ENCODE measurements at regions of chr17 and their contacts with region 1.

Region 1: GRCh38 chr17:39164675-39165143 is 1.3 kb downstream of the ARL5C start:
- DNase-seq: peak; percentile 83
- H3K4me3 Mint-ChIP-seq: peak overlapping the region; percentile 90
- H3K27ac Mint-ChIP-seq: no peak overlapping the region
- H3K4me1 Mint-ChIP-seq: peaks cover 16% of the 10 kb centered on the region
- H3K27me3 Mint-ChIP-seq: peaks cover 23% of the 10 kb centered on the region

Region 2: GRCh38 chr17:39174907-39175694 is 10.4 kb after region 1 on chr17:
- CTCF ChIA-PET with region 1: interaction called, 73 read pairs
- intact Hi-C with region 1: no loop called
- DNase-seq: peak; percentile 85
- H3K4me3 Mint-ChIP-seq: no peak overlapping the region
- H3K27ac Mint-ChIP-seq: no peak overlapping the region
- H3K4me1 Mint-ChIP-seq: peaks cover 4% of the 10 kb centered on the region
- H3K27me3 Mint-ChIP-seq: no peaks in the 10 kb centered on the region

Region 3: GRCh38 chr17:39183720-39184119 is 19.0 kb after region 1 on chr17:
- CTCF ChIA-PET with region 1: interaction called, 16 read pairs
- intact Hi-C with region 1: no loop called
- DNase-seq: no peak
- H3K4me3 Mint-ChIP-seq: no peak overlapping the region
- H3K27ac Mint-ChIP-seq: no peak overlapping the region
- H3K4me1 Mint-ChIP-seq: no peaks in the 10 kb centered on the region
- H3K27me3 Mint-ChIP-seq: no peaks in the 10 kb centered on the region

Region 4: DNA sequence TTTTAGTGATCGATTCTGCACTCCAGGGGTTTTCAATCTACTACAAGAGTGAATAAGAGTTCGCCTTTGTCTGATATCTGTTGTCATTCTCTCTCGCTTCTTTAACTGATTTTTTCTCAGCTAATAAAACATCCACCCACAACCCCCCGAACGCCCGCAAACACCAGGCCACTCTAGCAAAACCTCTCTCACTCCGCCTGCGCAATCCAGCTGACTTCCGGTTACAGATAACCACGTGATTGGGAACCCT is 35.0 kb after region 1 on chr17:
- CTCF ChIA-PET with region 1: interaction called, 9 read pairs
- intact Hi-C with region 1: loop called (anchors 2 kb)
- DNase-seq: peak; percentile 94
- H3K4me3 Mint-ChIP-seq: peak overlapping the region; percentile 86
- H3K27ac Mint-ChIP-seq: peak overlapping the region; percentile 99
- H3K4me1 Mint-ChIP-seq: peaks cover 50% of the 10 kb centered on the region
- H3K27me3 Mint-ChIP-seq: no peaks in the 10 kb centered on the region

Region 5: GRCh38 chr17:39235555-39236449 is 71.1 kb after region 1 on chr17:
- CTCF ChIA-PET with region 1: interaction called, 16 read pairs
- intact Hi-C with region 1: loop called (anchors 5 kb)
- DNase-seq: peak; percentile 76
- H3K4me3 Mint-ChIP-seq: no peak overlapping the region
- H3K27ac Mint-ChIP-seq: no peak overlapping the region
- H3K4me1 Mint-ChIP-seq: peaks cover 34% of the 10 kb centered on the region
- H3K27me3 Mint-ChIP-seq: peaks cover 2% of the 10 kb centered on the region

Region 6: GRCh38 chr17:39244600-39245570 is 80.2 kb after region 1 on chr17:
- CTCF ChIA-PET with region 1: interaction called, 16 read pairs
- intact Hi-C with region 1: no loop called
- DNase-seq: peak; percentile 96
- H3K4me3 Mint-ChIP-seq: no peak overlapping the region
- H3K27ac Mint-ChIP-seq: no peak overlapping the region
- H3K4me1 Mint-ChIP-seq: peaks cover 8% of the 10 kb centered on the region
- H3K27me3 Mint-ChIP-seq: no peaks in the 10 kb centered on the region

Measured in activated naive CD4-positive, alpha-beta T cell treated with anti-CD3 and anti-CD28 coated beads for 36 hours (primary cell).